SK-MEL-5 (cell line): ENCODE measurements at regions of chr5 and their contacts with region 1.

Region 1: GRCh38 chr5:57442080-57442839 is 40.4 kb downstream of the ACTBL2 start:
- DNase-seq: peak; percentile 99

Region 2: GRCh38 chr5:57499262-57500050 is 57.2 kb after region 1 on chr5:
- in situ Hi-C with region 1: loop called (anchors 10 kb)
- DNase-seq: peak; percentile 90